ENCODE measurements at regions of chr11 and their contacts with region 1.

Region 1: GRCh38 chr11:46889689-46890475 is 28.5 kb downstream of the LRP4 start:
- DNase-seq: peak; percentile 69 to 79 (median 71)
- ATAC-seq: peak; percentile 87
- H3K4me3 ChIP-seq: no peak overlapping the region
- H3K27ac ChIP-seq: no peak overlapping the region
- H3K4me1 ChIP-seq: peaks cover 0 to 11% of the 10 kb centered on the region in 2 experiments; a peak in 3 of 5 replicates
- H3K27me3 ChIP-seq: peaks cover 18 to 45% of the 10 kb centered on the region in 2 experiments; a peak in 4 of 5 replicates
- CTCF ChIP-seq: peak; percentile 86 to 97 (median 86)
- EP300 ChIP-seq: 0 out of 2 replicates have a peak, but pooled peaks have one; percentile 6
- POLR2A ChIP-seq: no peak
- RAD21 ChIP-seq: peak; percentile 91 to 96

Region 2: DNA sequence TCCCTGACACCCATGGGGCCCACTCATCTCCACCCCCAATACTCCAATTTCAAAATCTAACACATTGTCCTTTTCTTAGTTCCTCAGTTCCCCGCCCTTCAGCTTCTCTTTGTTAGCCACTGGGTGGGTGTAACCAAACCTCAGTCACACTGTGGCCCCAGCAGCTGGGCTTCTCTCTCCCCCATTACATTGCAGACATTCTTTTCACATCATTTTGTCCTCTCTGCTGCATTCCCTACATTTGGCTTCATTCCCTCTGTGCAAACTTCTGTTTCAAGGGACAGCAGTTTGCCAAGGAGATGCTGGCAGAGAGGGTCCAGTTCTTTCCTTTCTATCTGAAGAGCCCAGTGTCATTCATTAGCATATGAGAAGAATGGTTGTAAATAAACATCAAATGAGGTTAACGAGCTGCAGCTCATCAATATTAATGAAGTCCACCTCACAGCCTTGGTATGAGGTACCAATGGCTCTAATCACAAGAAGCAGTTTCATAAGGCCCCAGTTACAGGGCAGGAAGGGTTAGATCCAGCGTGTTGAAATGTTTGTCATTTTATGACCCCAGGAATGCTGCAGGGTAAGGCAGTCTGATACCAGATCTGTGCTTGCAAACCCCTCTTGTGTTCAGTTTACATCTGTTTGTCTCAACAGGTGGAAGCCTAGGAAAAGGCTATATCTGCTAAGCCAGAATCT is 214.5 kb after region 1 on chr11:
- CTCF ChIA-PET with region 1: interaction called, 4 read pairs
- POLR2A ChIA-PET with region 1: no interaction called
- in situ Hi-C with region 1: no loop called
- intact Hi-C with region 1: loop called (anchors 5 kb)
- DNase-seq: no peak
- ATAC-seq: no peak
- H3K4me3 ChIP-seq: no peak overlapping the region
- H3K27ac ChIP-seq: no peak overlapping the region
- H3K4me1 ChIP-seq: no peaks in the 10 kb centered on the region
- H3K27me3 ChIP-seq: no peaks in the 10 kb centered on the region; a peak in 1 of 5 replicates
- CTCF ChIP-seq: no peak
- EP300 ChIP-seq: no peak
- POLR2A ChIP-seq: no peak
- RAD21 ChIP-seq: no peak

Region 3: DNA sequence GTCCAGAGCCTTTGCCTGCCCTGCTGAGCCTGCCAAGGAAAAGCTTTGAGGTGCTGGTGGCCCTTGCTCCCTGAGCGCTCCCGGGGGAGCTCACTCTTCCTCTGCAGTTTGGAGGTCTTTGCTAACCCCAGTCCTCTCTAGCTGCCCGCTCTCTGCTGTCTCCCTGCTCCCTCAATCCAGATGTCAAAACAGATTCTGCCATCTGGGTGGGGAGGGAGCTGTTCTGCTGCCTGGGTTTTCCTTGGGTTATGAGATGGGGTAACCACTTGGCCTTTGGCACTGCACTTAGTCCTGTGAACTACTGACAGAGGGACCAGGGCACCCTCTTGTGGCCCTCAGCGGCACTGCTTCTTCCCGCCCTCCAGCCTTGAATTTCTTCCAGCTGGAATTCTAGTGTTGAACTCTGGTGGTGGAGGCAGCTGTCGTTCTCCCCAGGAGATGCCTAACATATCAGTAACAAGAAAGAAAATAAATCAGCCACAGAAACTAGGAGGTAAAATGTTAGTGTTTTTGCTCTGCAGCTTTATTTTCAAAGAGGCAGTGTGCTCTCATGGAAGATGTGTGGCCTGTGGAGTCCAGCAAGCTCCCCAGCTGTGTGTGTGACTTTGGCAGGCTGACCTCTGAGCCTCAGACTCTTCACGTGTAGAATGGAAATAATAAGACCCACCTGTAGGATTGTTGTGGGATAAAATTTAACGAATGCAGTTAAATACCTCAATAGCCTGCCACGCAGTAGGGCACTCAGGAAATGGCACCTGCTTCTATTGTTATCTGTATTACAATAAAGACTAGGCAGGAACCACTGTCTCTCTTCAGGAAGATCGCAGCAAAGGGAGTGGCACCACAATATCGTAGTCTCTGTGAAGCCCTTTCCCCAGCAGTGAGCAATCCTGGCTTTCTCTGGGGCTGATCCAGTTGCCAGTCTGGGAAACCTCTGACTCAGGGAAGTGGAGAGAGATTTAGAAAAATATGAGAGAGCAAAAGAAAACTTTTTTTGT is 263.4 kb after region 1 on chr11:
- CTCF ChIA-PET with region 1: interaction called, 35 read pairs
- POLR2A ChIA-PET with region 1: no interaction called
- in situ Hi-C with region 1: no loop called
- intact Hi-C with region 1: loop called (anchors 1 kb)
- DNase-seq: peak; percentile 77 to 82 (median 80)
- ATAC-seq: peak; percentile 90
- H3K4me3 ChIP-seq: no peak overlapping the region
- H3K27ac ChIP-seq: no peak overlapping the region
- H3K4me1 ChIP-seq: peaks cover 0 to 5% of the 10 kb centered on the region in 2 experiments; a peak in 2 of 5 replicates
- H3K27me3 ChIP-seq: no peaks in the 10 kb centered on the region
- CTCF ChIP-seq: peak; percentile 92 to 98 (median 98)
- EP300 ChIP-seq: no peak
- POLR2A ChIP-seq: no peak
- RAD21 ChIP-seq: peak; percentile 91 to 98

Region 4: DNA sequence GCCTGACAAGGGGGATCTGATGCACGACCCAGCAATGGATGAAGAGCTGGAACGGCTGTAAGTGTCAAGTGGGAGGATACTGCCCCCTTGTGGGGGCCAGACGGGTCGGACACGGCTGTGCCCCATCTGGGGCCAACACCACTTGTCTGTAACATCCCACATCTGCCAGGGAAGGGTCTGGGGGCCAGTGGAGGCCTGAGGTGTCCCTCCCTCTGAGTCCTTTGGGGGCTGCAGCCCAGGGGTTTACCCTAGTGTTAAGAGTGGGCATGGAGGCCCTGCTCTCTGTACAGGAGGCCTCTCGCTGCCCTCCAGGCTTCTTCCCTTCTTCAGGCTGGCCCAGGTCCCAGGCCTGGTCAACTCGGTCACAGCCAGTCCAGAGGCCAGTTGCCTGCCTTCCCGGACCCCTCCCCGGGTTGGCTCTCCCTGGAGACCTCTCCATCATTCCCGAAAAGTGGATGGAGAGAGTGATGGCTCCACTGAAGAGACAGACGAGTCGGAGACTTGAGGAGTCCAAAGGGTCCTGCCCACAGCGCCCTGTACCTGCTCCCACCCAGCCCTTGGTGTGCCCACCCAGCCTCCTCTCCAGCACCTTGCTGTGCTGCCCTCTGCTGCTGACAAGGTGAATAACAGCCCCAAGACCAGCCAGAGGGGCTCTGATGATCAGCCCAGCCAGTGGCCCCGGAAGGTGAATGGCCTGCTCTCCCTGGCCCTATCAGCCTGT is 271.4 kb after region 1 on chr11:
- CTCF ChIA-PET with region 1: interaction called, 27 read pairs
- POLR2A ChIA-PET with region 1: no interaction called
- in situ Hi-C with region 1: loop called (anchors 5 kb)
- intact Hi-C with region 1: loop called (anchors 2 kb)
- DNase-seq: peak; percentile 82 to 87 (median 84)
- ATAC-seq: peak; percentile 90
- H3K4me3 ChIP-seq: no peak overlapping the region
- H3K27ac ChIP-seq: no peak overlapping the region
- H3K4me1 ChIP-seq: peaks cover 0 to 21% of the 10 kb centered on the region in 2 experiments; a peak in 2 of 5 replicates
- H3K27me3 ChIP-seq: no peaks in the 10 kb centered on the region
- CTCF ChIP-seq: peak; percentile 81 to 86 (median 83)
- EP300 ChIP-seq: no peak
- POLR2A ChIP-seq: no peak
- RAD21 ChIP-seq: peak; percentile 57 to 80

Region 5: GRCh38 chr11:47355283-47356128 is 465.6 kb after region 1 on chr11:
- CTCF ChIA-PET with region 1: interaction called, 3 read pairs
- POLR2A ChIA-PET with region 1: no interaction called
- in situ Hi-C with region 1: loop called (anchors 10 kb)
- intact Hi-C with region 1: loop called (anchors 10 kb)
- DNase-seq: peak; percentile 78 to 96 (median 82)
- ATAC-seq: peak; percentile 96
- H3K4me3 ChIP-seq: no peak overlapping the region
- H3K27ac ChIP-seq: no peak overlapping the region; the same call in 2 of the 3 replicates
- H3K4me1 ChIP-seq: peaks cover 0 to 48% of the 10 kb centered on the region in 2 experiments; a peak in 3 of 5 replicates
- H3K27me3 ChIP-seq: no peaks in the 10 kb centered on the region
- CTCF ChIP-seq: peak; percentile 99 to 100 (median 100)
- EP300 ChIP-seq: no peak
- POLR2A ChIP-seq: no peak
- RAD21 ChIP-seq: peak; percentile 91 to 97

Region 6: DNA sequence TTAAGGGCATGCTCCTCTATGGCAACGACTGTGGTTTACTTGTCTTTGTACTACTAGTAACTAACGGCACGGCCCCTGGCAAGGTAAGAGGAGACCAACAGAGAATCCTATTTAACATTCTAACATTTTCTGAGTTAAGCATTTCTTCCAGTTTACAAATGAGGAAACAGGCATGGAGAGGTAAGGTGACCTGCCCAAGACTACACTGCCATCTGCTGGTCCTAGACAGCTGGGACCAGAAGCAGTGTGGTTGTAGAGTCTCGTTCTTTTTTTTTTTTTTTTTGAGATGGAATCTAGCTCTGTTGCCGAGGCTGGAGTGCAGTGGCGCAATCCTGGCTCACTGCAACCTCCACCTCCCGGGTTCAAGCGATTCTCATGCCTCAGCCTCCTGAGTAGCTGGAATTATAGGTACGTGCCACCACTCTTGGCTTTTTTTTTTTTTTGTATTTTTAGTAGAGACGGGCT is 564.3 kb after region 1 on chr11:
- CTCF ChIA-PET with region 1: no interaction called
- POLR2A ChIA-PET with region 1: no interaction called
- in situ Hi-C with region 1: no loop called
- intact Hi-C with region 1: loop called (anchors 10 kb)
- DNase-seq: peak; percentile 61 to 87 (median 74)
- ATAC-seq: peak; percentile 98
- H3K4me3 ChIP-seq: no peak overlapping the region
- H3K27ac ChIP-seq: no peak overlapping the region
- H3K4me1 ChIP-seq: peaks cover 0 to 2% of the 10 kb centered on the region in 2 experiments; a peak in 1 of 5 replicates
- H3K27me3 ChIP-seq: no peaks in the 10 kb centered on the region; a peak in 1 of 5 replicates
- CTCF ChIP-seq: peak; percentile 84 to 95 (median 87)
- EP300 ChIP-seq: 0 out of 2 replicates have a peak, but pooled peaks have one; percentile 6
- POLR2A ChIP-seq: no peak
- RAD21 ChIP-seq: peak; percentile 66 to 76

Measured in K562 (cell line).